Common myeloid progenitor, CD34-positive (primary cell): ENCODE measurements at regions of chr5 and their contacts with region 1.

Region 1: DNA sequence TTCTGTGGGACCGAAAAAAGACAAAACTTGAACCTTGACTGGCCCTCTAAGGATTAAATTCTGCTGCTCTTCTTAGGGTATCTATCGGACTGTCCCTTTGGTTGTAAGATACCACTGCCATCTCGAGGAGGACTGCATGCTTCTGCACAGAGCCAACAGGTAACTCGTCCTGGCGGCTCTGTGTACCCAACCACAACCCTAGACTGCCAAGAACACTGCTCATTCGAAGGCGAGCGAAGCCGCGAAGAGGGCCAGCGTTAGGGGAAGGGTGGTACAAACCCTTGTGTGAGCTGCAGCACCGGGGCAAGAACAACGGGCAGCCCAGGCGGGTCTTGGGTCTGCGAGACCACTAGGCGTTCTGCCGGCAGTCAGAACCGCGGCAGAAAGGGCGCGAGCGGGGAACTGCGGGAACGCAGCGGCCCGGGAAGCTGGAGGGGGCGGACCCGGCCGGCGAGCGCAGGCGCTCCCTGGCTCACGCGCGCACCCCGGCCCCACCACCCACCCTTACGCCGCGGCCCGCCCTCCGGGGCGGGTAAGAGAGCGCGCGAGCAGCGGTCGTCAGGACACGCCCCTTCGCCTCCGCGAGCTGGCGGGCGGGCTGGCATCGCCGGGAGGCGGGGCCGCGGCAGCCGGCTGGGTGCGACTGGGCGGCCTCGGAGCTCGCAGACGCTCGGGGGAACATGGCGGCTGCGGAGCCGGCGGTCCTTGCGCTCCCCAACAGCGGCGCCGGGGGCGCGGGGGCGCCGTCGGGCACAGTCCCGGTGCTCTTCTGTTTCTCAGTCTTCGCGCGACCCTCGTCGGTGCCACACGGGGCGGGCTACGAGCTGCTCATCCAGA is at the start of gene ISOC1:
- DNase-seq: peak; percentile 90 to 95 (median 95)
- H3K4me3 ChIP-seq: peak within 1 kb of the TSS; percentile 84 to 97 (median 86)
- H3K27ac ChIP-seq: peak within 1 kb of the TSS in 1 of 2 experiments; percentile 56
- H3K4me1 ChIP-seq: peaks cover 13 to 40% (median 28%) of the 10 kb centered on the region in 4 experiments
- H3K27me3 ChIP-seq: no peaks in the 10 kb centered on the region

Region 2: GRCh38 chr5:128896675-128897074 is 197.6 kb before region 1 on chr5:
- CTCF ChIA-PET with region 1: no interaction called
- POLR2A ChIA-PET with region 1: no interaction called
- DNase-seq: no peak
- H3K4me3 ChIP-seq: no peak overlapping the region
- H3K27ac ChIP-seq: no peak overlapping the region
- H3K4me1 ChIP-seq: no peaks in the 10 kb centered on the region
- H3K27me3 ChIP-seq: no peaks in the 10 kb centered on the region

Region 3: GRCh38 chr5:129110742-129111141 is 16.4 kb after region 1 on chr5:
- CTCF ChIA-PET with region 1: interaction called, 15 read pairs
- POLR2A ChIA-PET with region 1: interaction called, 4 read pairs
- DNase-seq: no peak
- H3K4me3 ChIP-seq: no peak overlapping the region
- H3K27ac ChIP-seq: no peak overlapping the region
- H3K4me1 ChIP-seq: peaks cover 0 to 3% (median under 1%) of the 10 kb centered on the region in 4 experiments
- H3K27me3 ChIP-seq: no peaks in the 10 kb centered on the region

Region 4: DNA sequence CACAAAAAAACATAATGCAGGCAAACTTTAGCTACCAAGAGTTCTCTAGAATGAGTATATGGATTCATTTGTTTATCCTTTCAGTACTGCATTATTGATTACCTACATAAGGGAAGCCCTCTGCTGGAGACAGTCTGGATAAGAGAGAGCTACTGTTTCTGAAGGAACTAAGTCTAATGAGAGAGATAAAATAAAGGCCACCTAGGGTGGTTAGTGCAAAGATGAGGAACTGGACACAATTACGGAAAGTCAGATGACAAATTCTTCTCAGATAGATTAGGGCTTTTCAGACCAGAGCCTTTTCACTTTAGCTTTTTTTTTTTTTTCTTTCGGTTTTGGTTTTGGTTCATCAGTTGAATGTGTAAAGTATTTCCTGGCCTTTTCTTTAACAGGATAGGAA is 31.5 kb after region 1 on chr5:
- CTCF ChIA-PET with region 1: interaction called, 33 read pairs
- POLR2A ChIA-PET with region 1: interaction called, 3 read pairs
- DNase-seq: peak; percentile 13 to 62 (median 46)
- H3K4me3 ChIP-seq: peak overlapping the region in 1 of 7 experiments; percentile 29
- H3K27ac ChIP-seq: no peak overlapping the region
- H3K4me1 ChIP-seq: peaks cover 0 to 8% (median 2%) of the 10 kb centered on the region in 4 experiments
- H3K27me3 ChIP-seq: no peaks in the 10 kb centered on the region